ENCODE measurements at regions of chr17 and their contacts with region 1.

Region 1: DNA sequence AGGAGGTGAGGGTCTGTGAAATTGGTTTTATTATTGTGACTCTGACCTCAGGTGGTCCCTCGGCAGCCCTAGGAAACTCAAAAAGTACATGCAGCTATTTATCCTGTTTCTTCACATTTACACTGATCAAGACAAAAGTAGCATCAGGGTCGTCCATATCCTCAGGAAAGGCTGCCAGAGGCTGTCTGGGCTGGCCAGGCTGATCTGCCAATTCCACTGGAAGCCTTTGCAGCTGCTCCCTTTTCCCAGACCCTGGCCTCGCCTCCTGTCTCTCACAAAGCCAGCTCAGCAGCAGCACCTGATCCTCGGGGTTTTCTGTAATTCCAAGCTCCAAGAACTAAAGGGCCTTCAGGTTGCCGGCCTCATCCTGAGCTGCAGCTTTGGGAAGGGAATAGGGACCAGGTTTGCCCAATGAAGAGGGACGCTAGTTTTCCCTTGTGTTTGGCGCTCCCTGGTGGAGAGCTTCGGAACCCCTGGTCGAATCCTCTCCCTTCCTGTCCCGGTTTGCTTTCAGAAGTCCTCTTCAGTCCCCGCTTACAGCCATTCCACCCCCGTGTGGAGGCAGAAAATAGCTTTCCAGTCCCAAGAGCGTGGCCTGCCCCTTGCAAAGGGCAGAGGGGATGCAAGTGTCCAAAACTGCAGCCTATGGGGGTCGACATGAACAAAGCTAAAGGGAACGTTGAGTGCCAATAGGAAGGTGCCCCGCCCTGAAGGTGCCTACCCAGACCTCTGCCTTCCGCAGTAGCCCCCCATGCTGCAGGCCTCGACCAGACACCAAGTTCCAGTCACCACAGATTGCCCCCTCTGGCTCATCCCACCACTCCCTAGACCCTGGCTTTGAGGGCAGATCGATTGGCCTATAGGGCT is 13.4 kb downstream of the MFSD6L start:
- DNase-seq: peak; percentile 18 to 60 (median 45)
- ATAC-seq: peak; percentile 62
- H3K4me3 ChIP-seq: no peak overlapping the region
- H3K4me3 Mint-ChIP-seq: no peak overlapping the region
- H3K27ac ChIP-seq: no peak overlapping the region
- H3K27ac Mint-ChIP-seq: no peak overlapping the region
- H3K4me1 ChIP-seq: no peaks in the 10 kb centered on the region
- H3K4me1 Mint-ChIP-seq: peaks cover 0 to 4% (median 0%) of the 10 kb centered on the region in 7 donors
- H3K27me3 ChIP-seq: no peaks in the 10 kb centered on the region
- H3K27me3 Mint-ChIP-seq: peaks cover 0 to 18% (median 0%) of the 10 kb centered on the region in 5 donors

Region 2: DNA sequence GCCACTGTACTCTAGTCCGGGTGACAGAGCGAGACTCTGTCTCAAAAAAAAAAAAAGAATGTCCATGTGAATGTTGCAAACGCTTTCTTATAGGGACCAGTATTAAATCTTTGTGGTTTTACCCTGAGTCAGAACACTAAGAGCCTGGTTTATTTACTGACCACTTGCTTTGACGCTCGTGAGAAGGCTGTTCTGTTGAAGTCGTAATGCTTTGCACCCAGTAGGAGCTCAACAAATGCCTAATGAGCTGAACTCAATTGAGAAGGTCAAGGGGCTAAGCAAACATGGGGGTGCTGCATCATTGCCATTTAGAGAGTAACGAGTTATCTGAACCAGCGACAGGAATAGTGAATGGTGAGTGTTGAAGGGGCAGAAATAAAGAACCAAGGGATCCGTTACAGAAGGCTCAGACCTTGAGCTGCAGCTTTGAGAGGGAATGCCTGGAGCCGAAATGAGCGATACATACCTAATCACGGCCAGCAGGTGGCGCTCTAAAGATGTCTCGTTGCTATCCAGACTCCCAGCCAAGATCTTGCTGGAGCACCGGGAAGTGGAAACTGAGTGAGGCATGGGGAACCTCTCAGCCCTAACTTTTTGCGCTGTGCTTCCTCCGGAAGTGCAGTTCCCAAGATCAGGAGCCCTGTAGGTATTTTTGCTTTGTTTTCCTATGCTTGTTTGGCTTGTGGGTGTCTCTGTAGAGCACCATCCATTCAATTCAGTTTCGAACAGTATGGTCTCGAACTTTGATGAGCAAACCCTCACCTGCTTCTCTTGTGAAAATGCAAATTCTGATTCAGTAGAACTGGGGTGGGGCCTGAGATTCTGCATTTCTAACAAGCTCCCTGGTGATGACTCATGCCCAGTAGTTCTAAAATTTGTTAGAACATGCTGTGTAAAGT is 375.6 kb before region 1 on chr17:
- CTCF ChIA-PET with region 1: interaction called, 3 read pairs
- POLR2A ChIA-PET with region 1: no interaction called
- intact Hi-C with region 1: loop called in 1 of 2 experiments (anchors 1 kb)
- DNase-seq: peak; percentile 56 to 81 (median 70)
- ATAC-seq: peak; percentile 84
- H3K4me3 ChIP-seq: no peak overlapping the region
- H3K4me3 Mint-ChIP-seq: peak overlapping the region in 1 of 10 donors; percentile 48
- H3K27ac ChIP-seq: no peak overlapping the region
- H3K27ac Mint-ChIP-seq: no peak overlapping the region
- H3K4me1 ChIP-seq: peaks cover 0 to 3% of the 10 kb centered on the region in 2 donors
- H3K4me1 Mint-ChIP-seq: peaks cover 9 to 26% (median 15%) of the 10 kb centered on the region in 7 donors
- H3K27me3 ChIP-seq: no peaks in the 10 kb centered on the region
- H3K27me3 Mint-ChIP-seq: peaks cover 0 to 37% (median 8%) of the 10 kb centered on the region in 5 donors